BJ (cell line): ENCODE measurements at regions of chr15 and their contacts with region 1.

Region 1: DNA sequence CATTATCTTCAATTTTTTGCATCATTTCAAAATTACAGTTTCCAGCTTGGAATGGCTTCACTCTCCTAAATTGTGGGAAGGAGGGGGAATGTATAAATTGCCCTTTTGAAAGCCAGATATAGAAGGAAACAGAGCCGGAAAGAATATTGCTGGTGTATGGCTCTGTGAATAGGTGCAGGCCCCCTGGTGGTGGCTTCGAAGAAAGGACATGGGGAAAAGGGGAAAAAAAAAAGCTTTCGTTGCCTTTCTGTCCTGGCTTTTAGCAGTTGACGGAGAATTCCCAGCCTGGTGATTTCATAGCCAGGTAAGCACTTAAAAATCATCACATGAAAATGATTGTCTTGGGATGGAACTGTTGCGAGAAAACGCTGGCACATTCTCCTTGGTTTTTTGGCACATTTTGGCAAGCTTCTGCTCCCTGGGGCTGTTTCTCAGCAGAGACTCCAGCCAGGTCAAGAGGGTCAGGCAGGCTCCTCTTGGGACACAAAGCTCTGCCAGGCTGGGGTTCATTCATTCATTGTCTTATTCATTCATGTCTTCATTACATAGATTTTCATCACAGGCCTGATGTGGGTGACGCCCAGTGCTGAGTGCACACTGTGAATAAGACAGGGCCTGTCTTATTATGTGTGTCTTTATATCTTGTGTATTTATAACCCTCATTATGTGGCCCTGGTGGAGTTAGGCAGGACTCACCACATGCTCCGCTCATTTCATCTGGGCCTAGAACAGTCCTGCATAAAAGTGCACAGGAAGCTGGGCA is 300.0 kb upstream of the TPM1 start:
- DNase-seq: peak; percentile 84
- H3K4me3 ChIP-seq: no peak overlapping the region
- H3K27me3 ChIP-seq: no peaks in the 10 kb centered on the region
- CTCF ChIP-seq: peak; percentile 83

Region 2: GRCh38 chr15:62389885-62390790 is 352.5 kb before region 1 on chr15:
- CTCF ChIA-PET with region 1: interaction called, 23 read pairs
- POLR2A ChIA-PET with region 1: no interaction called
- DNase-seq: no peak
- H3K4me3 ChIP-seq: peak within 1 kb of the TSS; percentile 99
- H3K27me3 ChIP-seq: no peaks in the 10 kb centered on the region
- CTCF ChIP-seq: no peak

Region 3: DNA sequence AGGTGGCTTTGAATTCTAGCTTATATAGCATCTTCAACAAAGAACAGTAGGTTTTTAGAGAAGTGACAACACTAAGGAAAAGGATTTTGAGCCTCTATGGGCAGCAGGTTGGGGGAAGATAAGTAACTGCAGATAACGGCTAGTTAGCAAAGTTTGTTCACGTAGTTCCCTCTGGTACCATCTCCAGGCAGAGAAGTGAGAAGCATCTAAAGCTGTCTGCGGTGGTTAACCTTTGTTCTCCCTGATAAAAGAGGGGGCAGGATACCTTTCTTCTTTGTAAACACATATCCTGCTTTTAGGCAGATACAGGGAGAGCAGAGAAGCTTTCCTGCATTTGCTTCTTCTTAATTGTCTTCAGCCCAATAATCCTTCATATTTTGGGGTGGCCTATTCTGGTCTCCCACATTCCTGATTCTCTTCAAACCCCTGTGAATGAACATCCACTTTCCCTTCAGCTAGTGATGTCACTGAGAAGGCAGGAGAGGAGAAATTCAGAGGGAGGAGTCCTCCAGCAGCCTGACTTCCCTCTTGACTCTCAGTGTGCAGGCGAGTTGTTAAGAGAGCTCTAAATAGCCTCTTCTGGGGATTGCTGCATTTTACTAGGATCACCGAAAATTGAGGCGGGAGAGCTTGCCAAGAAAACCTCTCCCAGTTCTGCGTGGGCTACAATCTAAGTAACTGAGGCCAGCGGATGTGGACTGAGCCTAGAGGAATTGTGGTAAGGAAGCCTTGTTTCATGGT is 183.8 kb before region 1 on chr15:
- CTCF ChIA-PET with region 1: no interaction called
- POLR2A ChIA-PET with region 1: no interaction called
- DNase-seq: peak; percentile 20
- H3K4me3 ChIP-seq: no peak overlapping the region
- H3K27me3 ChIP-seq: no peaks in the 10 kb centered on the region; the same call in 1 of the 2 replicates
- CTCF ChIP-seq: no peak

Region 4: GRCh38 chr15:62732078-62732477 is 10.5 kb before region 1 on chr15:
- CTCF ChIA-PET with region 1: interaction called, 16 read pairs
- POLR2A ChIA-PET with region 1: no interaction called
- DNase-seq: no peak
- H3K4me3 ChIP-seq: no peak overlapping the region
- H3K27me3 ChIP-seq: no peaks in the 10 kb centered on the region
- CTCF ChIP-seq: no peak

Region 5: DNA sequence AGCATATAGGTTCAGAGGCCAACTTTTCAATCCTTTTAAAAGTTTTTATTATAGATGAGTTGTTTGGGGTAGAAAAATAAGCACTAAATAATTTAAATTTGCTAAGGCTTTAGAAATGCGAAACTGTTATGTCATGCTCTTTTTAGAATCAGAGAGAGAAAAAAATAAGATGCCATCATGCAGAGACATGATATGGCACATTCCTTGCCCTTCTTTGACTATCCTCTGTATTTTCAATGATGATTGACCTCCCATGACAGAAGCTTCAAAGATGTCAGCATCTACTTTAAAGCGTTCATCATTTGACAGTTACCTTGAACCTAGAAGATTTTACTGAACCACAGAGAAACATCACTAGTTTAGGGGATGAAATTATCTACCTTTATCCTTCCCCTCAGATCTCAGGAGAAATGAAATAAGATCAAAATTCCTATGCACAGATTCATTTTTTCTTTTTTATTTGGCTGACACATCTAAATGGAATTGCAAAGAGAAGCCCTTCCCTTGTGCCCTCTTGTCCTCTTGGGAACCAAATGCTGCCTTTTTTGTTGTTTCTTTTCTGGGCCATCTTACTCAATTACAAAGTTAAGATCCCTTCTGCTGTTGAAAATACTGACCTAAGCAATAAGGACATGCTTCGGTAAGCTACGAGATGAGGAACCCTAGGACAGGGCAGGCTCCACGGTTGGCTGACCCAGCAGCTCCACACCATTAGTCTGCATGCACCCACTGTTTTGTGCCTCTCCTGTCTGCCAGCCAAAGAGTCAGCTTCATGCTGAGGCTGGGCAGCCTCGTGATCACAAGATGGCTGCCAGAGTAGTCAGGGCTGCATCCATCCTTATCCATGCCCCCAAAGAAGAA is 10.3 kb after region 1 on chr15:
- CTCF ChIA-PET with region 1: interaction called, 35 read pairs
- POLR2A ChIA-PET with region 1: no interaction called
- DNase-seq: no peak
- H3K4me3 ChIP-seq: no peak overlapping the region
- H3K27me3 ChIP-seq: no peaks in the 10 kb centered on the region
- CTCF ChIP-seq: no peak

Region 6: GRCh38 chr15:62758126-62758951 is 15.7 kb after region 1 on chr15:
- CTCF ChIA-PET with region 1: interaction called, 35 read pairs
- POLR2A ChIA-PET with region 1: no interaction called
- DNase-seq: peak; percentile 78
- H3K4me3 ChIP-seq: no peak overlapping the region
- H3K27me3 ChIP-seq: no peaks in the 10 kb centered on the region
- CTCF ChIP-seq: no peak

Region 7: DNA sequence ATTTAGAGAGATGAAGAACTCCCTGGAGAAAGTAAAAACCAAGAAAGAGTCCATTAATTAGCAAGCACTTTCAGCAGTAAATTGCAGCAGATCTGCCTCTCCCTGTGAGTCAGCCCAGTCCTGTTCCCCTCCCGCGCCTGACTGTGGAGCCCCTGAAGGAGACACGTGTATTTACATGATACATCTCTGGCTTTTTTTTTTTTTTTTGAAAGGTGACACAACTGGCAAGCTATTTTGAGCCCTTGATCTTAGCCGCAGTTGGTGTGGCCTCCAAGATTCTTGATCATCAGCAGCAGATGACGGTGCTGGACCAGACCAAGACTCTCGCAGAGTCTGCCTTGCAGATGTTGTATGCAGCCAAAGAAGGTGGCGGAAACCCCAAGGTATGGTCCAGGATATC is 28.2 kb after region 1 on chr15:
- CTCF ChIA-PET with region 1: interaction called, 13 read pairs
- POLR2A ChIA-PET with region 1: no interaction called
- DNase-seq: peak; percentile 68
- H3K4me3 ChIP-seq: no peak overlapping the region
- H3K27me3 ChIP-seq: no peaks in the 10 kb centered on the region
- CTCF ChIP-seq: 0 out of 2 replicates have a peak, but pooled peaks have one; percentile 2

Region 8: DNA sequence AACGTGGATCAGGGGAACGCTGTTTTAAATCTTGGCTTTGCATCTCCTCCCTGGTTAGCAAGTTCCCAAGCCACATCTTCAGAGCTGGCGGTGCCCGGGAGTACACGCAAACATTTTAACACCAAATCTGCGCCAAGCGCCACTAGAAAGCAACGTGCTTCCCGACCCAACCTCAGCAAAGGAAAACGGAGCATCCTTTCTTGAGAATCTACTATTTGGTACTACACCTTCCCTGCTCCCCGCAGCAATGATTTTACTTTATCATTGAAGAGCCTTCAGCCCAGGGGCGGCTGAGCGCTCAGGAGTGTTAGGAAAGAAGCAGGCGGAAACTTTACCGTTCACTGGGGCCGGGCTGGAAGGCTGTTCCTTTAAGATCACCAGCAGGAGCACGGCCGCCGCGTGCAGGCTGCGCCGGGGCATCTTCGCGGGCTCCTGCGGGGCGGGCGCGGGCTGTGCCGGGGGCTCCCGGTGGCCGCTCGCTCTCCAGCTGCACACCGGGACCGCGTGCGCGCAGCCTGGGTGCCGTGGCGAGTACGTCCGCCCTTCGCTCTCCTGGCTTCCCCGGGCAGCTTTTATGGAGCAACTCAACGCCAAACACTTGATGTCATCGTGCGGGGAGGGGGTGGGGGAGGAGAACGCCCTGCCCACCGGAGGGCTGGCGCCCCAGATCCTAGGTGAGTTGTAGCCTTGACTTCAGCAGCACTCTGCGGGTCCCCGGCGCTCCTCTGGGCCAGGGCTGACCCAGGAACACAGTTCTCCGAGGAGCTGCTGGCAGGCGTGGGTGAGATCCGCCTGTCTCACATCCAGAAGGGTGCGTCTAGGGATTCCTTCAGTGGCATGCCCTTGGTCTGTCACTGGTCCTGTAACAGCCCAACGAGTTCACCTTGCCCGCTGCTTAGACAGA is 639.0 kb after region 1 on chr15 and contains the start of gene CA12:
- CTCF ChIA-PET with region 1: no interaction called
- POLR2A ChIA-PET with region 1: no interaction called
- DNase-seq: no peak
- H3K4me3 ChIP-seq: peak within 1 kb of the TSS; percentile 47
- H3K27me3 ChIP-seq: no peaks in the 10 kb centered on the region
- CTCF ChIP-seq: no peak
- polyA plus RNA-seq, gene CA12: 13.1 and 16.9 TPM in 2 replicates